ENCODE measurements at regions of chr1 and their contacts with region 1.

Region 1: GRCh38 chr1:37978541-37978940 is 11.3 kb downstream of the SF3A3 start:
- DNase-seq: no peak
- H3K4me3 Mint-ChIP-seq: no peak overlapping the region
- H3K27ac Mint-ChIP-seq: no peak overlapping the region
- H3K4me1 Mint-ChIP-seq: no peaks in the 10 kb centered on the region
- H3K27me3 Mint-ChIP-seq: no peaks in the 10 kb centered on the region
- CTCF ChIP-seq: no peak

Region 2: GRCh38 chr1:37890378-37891014 is 88.0 kb before region 1 on chr1:
- CTCF ChIA-PET with region 1: interaction called, 8 read pairs
- POLR2A ChIA-PET with region 1: no interaction called
- intact Hi-C with region 1: loop called (anchors 1 kb)
- DNase-seq: peak; percentile 43
- H3K4me3 Mint-ChIP-seq: no peak overlapping the region
- H3K27ac Mint-ChIP-seq: no peak overlapping the region
- H3K4me1 Mint-ChIP-seq: no peaks in the 10 kb centered on the region
- H3K27me3 Mint-ChIP-seq: no peaks in the 10 kb centered on the region
- CTCF ChIP-seq: peak; percentile 42

Region 3: DNA sequence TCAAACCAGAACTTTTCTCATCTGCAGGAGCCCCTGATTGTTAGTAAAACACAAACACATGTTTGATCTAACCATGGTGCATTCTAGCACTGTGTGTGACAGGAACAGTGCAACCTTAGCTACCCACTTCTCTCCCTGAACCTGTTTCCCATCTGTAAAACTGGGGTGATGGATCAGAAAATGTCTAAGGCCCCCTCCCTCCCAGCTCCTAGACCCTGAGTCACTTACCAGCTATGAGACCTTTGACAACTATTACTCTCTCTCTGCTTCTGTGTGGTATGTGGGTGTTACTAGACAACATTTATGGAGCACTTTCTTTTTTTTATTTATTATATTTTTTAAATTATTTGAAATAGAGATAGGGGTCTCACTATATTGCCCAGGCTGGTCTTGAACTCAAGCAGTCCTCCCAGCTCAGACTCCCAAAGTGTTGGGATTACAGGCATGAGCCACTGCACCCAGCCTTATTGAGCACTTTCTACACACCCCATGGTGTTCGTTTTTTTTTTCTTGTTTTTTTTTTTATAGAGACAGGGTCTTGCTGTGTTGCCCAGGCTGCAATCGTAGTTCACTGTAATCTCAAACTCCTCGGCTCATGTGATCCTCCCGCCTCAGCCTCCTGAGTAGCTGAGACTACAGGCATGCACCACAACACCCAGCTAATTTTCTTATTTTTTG is 34.3 kb before region 1 on chr1:
- CTCF ChIA-PET with region 1: no interaction called
- POLR2A ChIA-PET with region 1: no interaction called
- intact Hi-C with region 1: no loop called
- DNase-seq: no peak
- H3K4me3 Mint-ChIP-seq: no peak overlapping the region
- H3K27ac Mint-ChIP-seq: no peak overlapping the region
- H3K4me1 Mint-ChIP-seq: no peaks in the 10 kb centered on the region
- H3K27me3 Mint-ChIP-seq: no peaks in the 10 kb centered on the region
- CTCF ChIP-seq: no peak

Region 4: GRCh38 chr1:37954316-37954971 is 24.1 kb before region 1 on chr1:
- CTCF ChIA-PET with region 1: interaction called, 10 read pairs
- POLR2A ChIA-PET with region 1: no interaction called
- intact Hi-C with region 1: no loop called
- DNase-seq: no peak
- H3K4me3 Mint-ChIP-seq: no peak overlapping the region
- H3K27ac Mint-ChIP-seq: no peak overlapping the region
- H3K4me1 Mint-ChIP-seq: no peaks in the 10 kb centered on the region
- H3K27me3 Mint-ChIP-seq: no peaks in the 10 kb centered on the region
- CTCF ChIP-seq: no peak

Measured in MCF 10A (cell line).